A673 (cell line): ENCODE measurements at regions of chr14 and their contacts with region 1.

Region 1: GRCh38 chr14:106248321-106249192 is 722.2 kb downstream of the TMEM121 start:
- DNase-seq: no peak
- H3K4me3 ChIP-seq: no peak overlapping the region
- H3K27ac ChIP-seq: no peak overlapping the region
- H3K4me1 ChIP-seq: no peaks in the 10 kb centered on the region
- H3K27me3 ChIP-seq: peaks cover 57% of the 10 kb centered on the region
- CTCF ChIP-seq: no peak

Region 2: DNA sequence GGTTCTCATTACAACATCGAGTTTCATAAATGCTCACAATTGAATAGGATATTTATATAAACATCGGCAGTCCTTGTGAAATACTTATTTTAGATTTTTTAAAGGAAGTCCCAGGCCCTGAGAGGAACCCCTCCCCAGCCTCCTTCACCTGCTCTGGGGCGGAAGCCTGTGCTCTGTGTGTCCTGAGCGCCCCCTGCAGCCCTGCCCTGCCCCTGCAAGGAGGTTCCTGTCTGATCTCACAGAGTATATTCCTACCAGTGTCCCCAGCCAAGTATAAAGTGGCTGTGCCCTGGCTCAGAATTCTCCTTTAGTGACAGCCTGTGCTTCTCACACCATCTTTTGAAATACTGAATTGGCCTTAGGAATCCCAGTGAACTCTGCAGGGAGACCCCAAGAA is 62.7 kb before region 1 on chr14:
- CTCF ChIA-PET with region 1: no interaction called
- POLR2A ChIA-PET with region 1: no interaction called
- intact Hi-C with region 1: loop called (anchors 10 kb)
- DNase-seq: peak; percentile 19
- H3K4me3 ChIP-seq: no peak overlapping the region
- H3K27ac ChIP-seq: no peak overlapping the region
- H3K4me1 ChIP-seq: no peaks in the 10 kb centered on the region
- H3K27me3 ChIP-seq: peaks cover 61% of the 10 kb centered on the region
- CTCF ChIP-seq: peak; percentile 61